Activated T-helper 1 cell treated with anti-CD3 and anti-CD28 coated beads, Interleukin-12 subunit alpha, Interleukin-12 subunit beta, Interleukin-2, Interleukin-4 antibody, amounts not matched to agents 30 ng/mL and 10 ng/mL and 1 ng/mL, durations not matched to agents 14 hours and 24 hours and 36 hours (primary cell): ENCODE measurements at regions of chr15 and their contacts with region 1.

Region 1: GRCh38 chr15:41230650-41231533 is at the starts of genes CHP1 and EXD1:
- DNase-seq: peak; percentile 96
- H3K4me3 Mint-ChIP-seq: peak within 1 kb of the TSS; percentile 92
- H3K27ac Mint-ChIP-seq: peak within 1 kb of the TSS; percentile 89
- H3K4me1 Mint-ChIP-seq: peaks cover 23% of the 10 kb centered on the region
- H3K27me3 Mint-ChIP-seq: no peaks in the 10 kb centered on the region
- total RNA-seq, gene CHP1: 43.5 and 55.2 TPM in 2 replicates
- total RNA-seq, gene EXD1: not detected in 2 replicates

Region 2: DNA sequence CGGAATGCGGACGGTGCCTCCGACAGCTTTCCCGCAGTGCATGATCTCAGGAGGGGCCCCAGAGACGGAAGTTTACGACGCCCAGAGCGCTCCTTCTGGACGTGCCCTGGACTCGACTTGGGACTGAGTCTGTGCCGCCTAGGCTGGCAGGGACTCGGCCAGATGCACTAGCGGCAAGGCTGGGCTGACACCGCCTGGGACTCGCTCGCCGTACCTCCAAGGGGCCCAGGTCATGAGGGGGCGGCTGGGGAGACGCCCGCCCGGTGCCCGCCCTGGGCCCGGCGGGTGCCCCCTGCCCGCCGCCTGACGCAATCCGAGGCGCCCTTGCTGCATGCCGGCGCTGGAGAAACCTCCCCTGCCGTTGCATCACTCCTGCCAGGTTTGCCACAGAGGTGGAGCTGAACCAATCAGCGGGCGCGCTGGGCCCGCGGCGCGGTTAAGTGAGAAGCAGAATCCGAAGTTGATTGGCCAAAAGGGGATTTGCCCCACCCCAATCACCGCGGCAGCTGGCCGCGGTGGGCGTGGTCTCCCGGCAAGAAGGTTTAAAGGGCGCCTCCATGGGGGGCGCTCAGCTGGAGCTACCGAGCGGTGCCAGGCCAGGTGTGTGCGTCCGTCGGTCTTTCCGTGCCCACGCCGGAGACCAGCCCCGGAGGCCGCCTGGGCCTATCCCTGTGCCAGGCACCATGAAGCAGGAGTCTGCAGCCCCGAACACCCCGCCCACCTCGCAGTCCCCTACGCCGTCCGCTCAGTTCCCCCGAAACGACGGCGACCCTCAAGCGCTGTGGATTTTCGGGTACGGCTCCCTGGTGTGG is 277.8 kb before region 1 on chr15 and contains the start of gene CHAC1:
- intact Hi-C with region 1: loop called (anchors 1 kb)
- DNase-seq: peak; percentile 96
- H3K4me3 Mint-ChIP-seq: peak within 1 kb of the TSS; percentile 92
- H3K27ac Mint-ChIP-seq: peak within 1 kb of the TSS; percentile 89
- H3K4me1 Mint-ChIP-seq: peaks cover 48% of the 10 kb centered on the region
- H3K27me3 Mint-ChIP-seq: no peaks in the 10 kb centered on the region
- total RNA-seq, gene CHAC1: 11.7 and 12.4 TPM in 2 replicates

Region 3: GRCh38 chr15:41150279-41150678 is 80.6 kb before region 1 on chr15:
- intact Hi-C with region 1: loop called (anchors 2 kb)
- DNase-seq: no peak
- H3K4me3 Mint-ChIP-seq: peak overlapping the region; percentile 10
- H3K27ac Mint-ChIP-seq: no peak overlapping the region
- H3K4me1 Mint-ChIP-seq: peaks cover 21% of the 10 kb centered on the region
- H3K27me3 Mint-ChIP-seq: peaks cover 7% of the 10 kb centered on the region

Region 4: GRCh38 chr15:41283653-41284426 is 52.9 kb after region 1 on chr15:
- intact Hi-C with region 1: loop called (anchors 1 kb)
- DNase-seq: peak; percentile 96
- H3K4me3 Mint-ChIP-seq: peak overlapping the region; percentile 97
- H3K27ac Mint-ChIP-seq: peak overlapping the region; percentile 92
- H3K4me1 Mint-ChIP-seq: peaks cover 51% of the 10 kb centered on the region
- H3K27me3 Mint-ChIP-seq: no peaks in the 10 kb centered on the region